Esophagus squamous epithelium (tissue), 5 donors: ENCODE measurements at regions of chr4 and their contacts with region 1.

Region 1: DNA sequence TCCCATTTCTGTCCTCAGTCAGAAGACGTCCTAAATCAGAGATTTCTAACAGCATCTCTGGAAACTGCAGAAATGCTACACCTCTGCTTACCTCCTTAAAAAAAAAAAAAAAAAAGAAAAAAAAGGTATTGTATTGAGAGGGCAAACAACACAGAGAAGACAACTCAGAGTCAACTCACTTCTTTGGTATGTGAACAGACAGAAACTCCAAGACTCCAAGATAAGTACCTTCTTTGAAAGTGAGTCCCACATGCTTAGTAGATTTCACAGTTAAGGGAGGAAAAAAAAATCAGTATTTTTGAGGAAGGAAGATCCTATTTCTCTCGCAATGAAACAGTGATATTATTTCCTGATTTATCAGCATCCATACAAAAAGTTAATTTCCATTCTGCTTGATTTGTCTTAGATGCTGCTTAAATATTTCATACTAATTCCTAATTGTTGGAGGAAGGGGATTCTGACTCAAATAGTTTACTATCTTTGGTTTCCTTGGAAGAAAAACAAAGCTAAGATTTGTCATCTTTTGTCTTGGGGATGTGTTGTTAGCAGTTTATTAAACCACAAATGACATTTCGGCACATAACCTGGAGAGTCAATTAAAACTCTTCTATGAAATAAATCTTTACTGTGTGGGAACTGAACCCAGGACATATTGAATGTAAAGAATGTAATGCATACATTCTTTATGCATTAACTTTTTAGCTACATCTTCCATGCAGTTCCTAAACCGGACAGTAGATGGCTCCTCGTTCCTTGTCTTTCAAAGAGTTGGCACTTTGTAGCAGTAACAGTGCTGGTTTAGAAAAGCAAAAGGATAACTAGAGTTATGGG is 4.7 kb downstream of the RASGEF1B start:
- DNase-seq: no peak
- H3K4me3 ChIP-seq: no peak overlapping the region
- H3K27ac ChIP-seq: no peak overlapping the region
- H3K4me1 ChIP-seq: peaks cover 0 to 82% (median 12%) of the 10 kb centered on the region in 3 donors
- H3K27me3 ChIP-seq: no peaks in the 10 kb centered on the region
- CTCF ChIP-seq: peak; percentile 76 to 96 (median 91)
- POLR2A ChIP-seq: no peak

Region 2: GRCh38 chr4:81412946-81413495 is 54.0 kb before region 1 on chr4:
- intact Hi-C with region 1: loop called (anchors 10 kb)
- DNase-seq: no peak
- H3K4me3 ChIP-seq: no peak overlapping the region
- H3K27ac ChIP-seq: no peak overlapping the region
- H3K4me1 ChIP-seq: no peaks in the 10 kb centered on the region
- H3K27me3 ChIP-seq: no peaks in the 10 kb centered on the region
- CTCF ChIP-seq: no peak
- POLR2A ChIP-seq: no peak

Region 3: DNA sequence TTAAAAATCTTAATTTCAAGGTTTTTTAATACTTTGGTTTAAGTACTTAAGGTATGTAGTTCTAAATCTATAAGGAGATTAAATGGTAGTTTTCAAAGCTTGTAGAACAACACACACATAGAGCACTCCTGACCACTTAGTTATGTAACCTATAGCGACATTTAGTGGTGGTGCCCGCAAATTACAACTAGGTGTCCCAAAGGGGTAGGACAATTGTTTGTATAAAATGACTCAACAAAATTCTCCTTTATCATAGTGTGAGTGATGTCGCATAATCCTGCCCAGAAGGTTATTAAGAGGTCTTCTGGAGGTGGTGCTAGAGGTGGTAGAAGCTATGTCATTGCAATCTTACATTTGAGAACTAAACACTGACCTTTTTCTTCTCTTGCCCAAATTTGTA is 377.7 kb after region 1 on chr4:
- intact Hi-C with region 1: loop called (anchors 5 kb)
- DNase-seq: no peak
- H3K4me3 ChIP-seq: no peak overlapping the region
- H3K27ac ChIP-seq: no peak overlapping the region
- H3K4me1 ChIP-seq: no peaks in the 10 kb centered on the region
- H3K27me3 ChIP-seq: no peaks in the 10 kb centered on the region
- CTCF ChIP-seq: peak; percentile 63 to 89 (median 77)
- POLR2A ChIP-seq: no peak